Psoas muscle (tissue), 8 donors: ENCODE measurements at regions of chr17 and their contacts with region 1.

Region 1: DNA sequence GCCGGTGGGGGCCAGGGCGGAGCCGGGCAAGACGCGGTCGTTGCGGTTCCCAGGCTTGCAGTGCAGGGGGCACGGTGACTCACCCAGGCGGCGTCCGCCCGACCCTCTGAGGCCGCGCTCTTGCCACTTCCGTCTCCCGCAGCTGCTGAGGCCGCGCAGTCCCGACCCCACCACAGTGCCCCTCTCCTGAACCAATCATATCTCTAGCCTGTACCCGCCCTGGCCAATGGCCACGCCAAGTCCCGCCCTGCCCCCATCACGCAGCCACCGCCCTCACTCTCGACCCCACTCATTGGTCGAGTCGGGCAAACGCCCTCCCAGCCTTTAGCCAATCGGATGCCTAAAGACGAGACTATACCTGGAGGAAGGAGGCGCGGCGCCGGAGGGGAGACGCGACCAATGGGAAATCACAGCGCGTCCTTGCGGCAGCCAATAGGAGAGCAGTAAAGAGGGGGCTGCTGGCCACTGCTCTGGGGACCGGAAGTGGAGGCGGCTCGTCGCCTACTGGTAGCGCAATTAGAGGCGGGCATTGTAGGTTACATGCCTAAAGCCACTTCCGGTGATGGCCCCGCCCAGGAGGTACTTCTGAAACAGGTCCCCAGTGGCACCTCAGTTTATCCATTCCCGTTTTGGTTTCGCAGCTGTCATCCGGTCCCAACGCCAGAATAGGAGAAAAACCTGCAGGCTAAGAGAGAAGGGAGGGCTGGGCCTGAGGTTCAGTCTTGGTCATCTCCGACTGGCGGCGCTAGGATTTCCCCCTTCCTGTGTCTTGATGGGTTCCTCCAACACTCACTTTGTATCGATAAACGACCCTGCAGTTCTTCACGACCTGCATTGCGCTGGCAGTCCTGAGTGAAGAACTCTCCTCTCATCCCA is 3.5 kb upstream of the MTMR4 start:
- DNase-seq: peak; percentile 100
- ATAC-seq: peak; percentile 91 to 93 (median 92)
- H3K4me3 ChIP-seq: peak overlapping the region; percentile 87
- H3K27ac ChIP-seq: peak overlapping the region; percentile 97
- H3K4me1 ChIP-seq: peaks cover 26% of the 10 kb centered on the region
- H3K27me3 ChIP-seq: no peaks in the 10 kb centered on the region
- CTCF ChIP-seq: no peak

Region 2: DNA sequence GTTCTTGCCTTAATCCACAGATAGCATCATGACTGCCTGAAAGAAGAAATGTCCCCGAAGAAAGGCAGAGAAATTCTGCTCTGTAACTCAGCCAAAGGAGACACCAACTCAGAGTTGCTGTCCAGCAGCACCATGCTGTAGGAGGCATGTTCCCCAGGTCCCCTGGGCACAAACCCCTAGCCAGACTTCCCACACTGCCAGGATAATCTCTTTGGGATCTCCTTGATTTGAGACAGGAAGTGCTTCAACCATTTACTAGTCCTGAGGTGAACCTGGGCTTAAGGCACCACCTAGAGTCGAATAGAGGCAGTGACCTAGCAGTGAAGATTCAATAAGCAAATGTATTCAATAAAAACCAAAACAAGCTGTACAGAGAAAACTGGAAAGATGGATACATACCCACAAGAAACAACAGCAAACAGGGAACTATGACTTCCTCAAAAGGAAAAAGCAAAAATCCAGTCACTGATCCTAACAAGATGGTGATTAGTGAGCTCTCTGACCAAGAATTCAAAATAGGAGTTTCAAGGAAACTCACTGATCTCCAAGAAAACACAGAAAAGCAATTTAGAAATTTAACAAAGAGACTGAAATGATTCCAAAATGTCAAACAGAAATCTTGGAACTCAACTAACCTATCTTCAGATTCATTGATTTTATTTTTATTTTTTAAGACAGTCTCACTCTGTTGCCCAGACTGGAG is 345.5 kb before region 1 on chr17:
- intact Hi-C with region 1: no loop called
- DNase-seq: no peak
- ATAC-seq: no peak
- H3K4me3 ChIP-seq: no peak overlapping the region
- H3K27ac ChIP-seq: no peak overlapping the region
- H3K4me1 ChIP-seq: no peaks in the 10 kb centered on the region
- H3K27me3 ChIP-seq: peaks cover 0 to 15% (median 5%) of the 10 kb centered on the region in 3 donors
- CTCF ChIP-seq: peak; percentile 30

Region 3: DNA sequence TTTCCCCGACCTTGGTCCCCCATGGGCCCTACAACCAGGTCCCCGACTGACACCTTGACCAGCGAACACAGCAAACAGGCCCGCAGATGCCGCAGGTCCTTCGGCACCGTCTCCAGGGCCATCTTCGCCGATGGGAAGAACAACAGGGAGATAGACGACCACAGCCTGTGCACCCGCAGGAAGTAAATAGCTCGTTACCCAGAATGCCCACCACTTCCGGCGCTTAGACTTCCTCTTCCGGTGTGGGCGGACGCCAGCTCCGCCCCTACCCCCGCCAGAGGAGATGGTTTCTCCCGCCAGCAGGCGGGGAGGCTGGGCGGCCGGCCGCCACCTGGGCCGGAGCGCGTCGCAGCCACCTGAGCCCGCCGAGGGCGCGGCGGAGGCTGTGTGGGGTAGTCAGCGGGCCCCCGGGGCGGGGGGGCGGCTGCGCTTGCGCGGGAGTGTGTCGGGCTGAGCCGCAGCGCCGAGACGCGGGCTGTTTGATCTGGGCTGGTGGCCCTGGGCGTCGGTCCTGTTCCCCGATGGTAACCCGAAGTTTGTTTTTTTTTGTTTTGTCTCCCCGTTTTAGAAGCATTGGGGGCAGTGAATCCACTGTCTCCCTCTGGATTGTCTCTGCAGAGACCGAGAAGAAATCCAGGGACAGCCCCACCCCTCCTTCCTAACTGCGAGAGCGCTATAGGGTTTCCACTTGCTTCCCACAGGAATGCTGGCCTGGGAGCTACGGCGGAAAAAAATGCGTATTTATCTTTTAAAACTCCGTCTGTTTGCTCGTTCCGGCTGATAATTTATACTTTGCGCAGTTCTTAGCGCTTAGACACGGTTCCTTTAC is 165.7 kb before region 1 on chr17 and contains the start of gene SUPT4H1:
- intact Hi-C with region 1: loop called (anchors 10 kb)
- DNase-seq: peak; percentile 85 to 94
- ATAC-seq: peak; percentile 98 to 99 (median 98)
- H3K4me3 ChIP-seq: peak within 1 kb of the TSS; percentile 85
- H3K27ac ChIP-seq: peak within 1 kb of the TSS; percentile 94
- H3K4me1 ChIP-seq: peaks cover 15% of the 10 kb centered on the region
- H3K27me3 ChIP-seq: no peaks in the 10 kb centered on the region
- CTCF ChIP-seq: no peak
- total RNA-seq, gene SUPT4H1: 52.1 to 58.9 (median 56.2) TPM

Region 4: DNA sequence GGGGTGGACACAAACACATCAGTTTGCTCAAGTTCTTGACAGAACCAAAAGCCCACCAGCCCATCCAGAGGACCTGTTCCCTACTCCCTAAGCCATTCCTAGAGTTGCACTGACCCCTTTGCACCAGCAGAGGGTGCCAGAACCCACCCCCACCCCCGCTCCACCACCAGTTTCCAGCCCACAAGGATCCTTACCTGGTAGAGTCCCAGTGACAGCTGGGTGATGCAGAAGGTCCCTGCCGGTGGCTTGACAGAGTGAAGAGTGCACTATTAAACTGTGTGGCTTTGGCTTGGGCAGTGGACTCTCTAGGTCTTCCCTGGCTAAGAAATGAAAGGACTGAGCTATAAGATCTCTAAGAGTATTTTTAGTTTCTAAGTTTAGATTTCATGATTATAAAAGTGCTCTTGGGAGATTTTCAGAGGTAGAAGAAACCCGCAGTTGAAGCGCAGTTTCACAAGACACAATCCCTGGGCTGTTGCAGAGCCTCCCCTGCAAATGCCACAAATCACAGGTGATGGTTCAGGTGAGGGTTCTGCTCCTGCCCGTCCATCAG is 69.8 kb after region 1 on chr17:
- intact Hi-C with region 1: loop called in 1 of 2 experiments (anchors 5 kb)
- DNase-seq: peak; percentile 20 to 52
- ATAC-seq: peak; percentile 37 to 77 (median 50)
- H3K4me3 ChIP-seq: no peak overlapping the region
- H3K27ac ChIP-seq: no peak overlapping the region
- H3K4me1 ChIP-seq: no peaks in the 10 kb centered on the region
- H3K27me3 ChIP-seq: no peaks in the 10 kb centered on the region
- CTCF ChIP-seq: peak; percentile 77

Region 5: DNA sequence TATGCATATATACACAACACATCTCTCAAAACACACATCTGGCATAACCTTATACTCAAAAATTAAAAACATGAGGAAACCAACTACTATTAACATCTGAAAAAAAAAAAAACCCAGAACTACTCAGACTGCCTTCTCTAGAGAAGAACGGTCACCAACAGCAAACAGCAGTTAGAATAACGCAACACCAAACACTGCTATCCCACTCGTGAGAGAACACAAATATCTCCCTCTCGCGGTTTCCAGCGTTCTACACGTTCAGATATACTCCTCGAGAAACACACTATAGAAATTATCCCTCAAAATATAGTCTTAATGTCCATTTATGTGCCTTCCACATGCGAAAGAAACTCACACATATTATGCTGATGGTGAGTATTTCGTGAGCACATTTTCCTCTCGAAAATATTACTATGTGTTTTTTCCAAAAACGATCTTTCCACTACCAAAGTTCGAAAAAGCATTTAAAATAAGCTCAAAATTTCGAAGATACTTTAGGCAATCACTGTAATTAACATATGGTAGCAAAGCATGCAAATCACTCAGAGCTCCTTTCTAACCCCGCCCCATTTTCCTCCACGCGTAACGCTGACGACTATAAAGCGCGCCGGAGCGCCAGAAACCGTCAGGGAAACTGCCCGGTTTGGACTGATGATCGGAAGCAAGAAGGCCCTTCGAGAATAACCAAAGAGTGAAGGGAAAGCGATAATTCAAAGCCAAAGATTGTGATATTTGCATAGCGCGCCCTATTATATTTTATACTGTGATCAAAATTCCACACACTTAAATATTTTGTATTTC is 113.8 kb after region 1 on chr17:
- intact Hi-C with region 1: loop called in 1 of 2 experiments (anchors 10 kb)
- DNase-seq: peak; percentile 91 to 96
- ATAC-seq: peak; percentile 97 to 98 (median 98)
- H3K4me3 ChIP-seq: peak overlapping the region; percentile 61
- H3K27ac ChIP-seq: peak overlapping the region; percentile 77
- H3K4me1 ChIP-seq: no peaks in the 10 kb centered on the region
- H3K27me3 ChIP-seq: no peaks in the 10 kb centered on the region
- CTCF ChIP-seq: peak; percentile 22

Region 6: DNA sequence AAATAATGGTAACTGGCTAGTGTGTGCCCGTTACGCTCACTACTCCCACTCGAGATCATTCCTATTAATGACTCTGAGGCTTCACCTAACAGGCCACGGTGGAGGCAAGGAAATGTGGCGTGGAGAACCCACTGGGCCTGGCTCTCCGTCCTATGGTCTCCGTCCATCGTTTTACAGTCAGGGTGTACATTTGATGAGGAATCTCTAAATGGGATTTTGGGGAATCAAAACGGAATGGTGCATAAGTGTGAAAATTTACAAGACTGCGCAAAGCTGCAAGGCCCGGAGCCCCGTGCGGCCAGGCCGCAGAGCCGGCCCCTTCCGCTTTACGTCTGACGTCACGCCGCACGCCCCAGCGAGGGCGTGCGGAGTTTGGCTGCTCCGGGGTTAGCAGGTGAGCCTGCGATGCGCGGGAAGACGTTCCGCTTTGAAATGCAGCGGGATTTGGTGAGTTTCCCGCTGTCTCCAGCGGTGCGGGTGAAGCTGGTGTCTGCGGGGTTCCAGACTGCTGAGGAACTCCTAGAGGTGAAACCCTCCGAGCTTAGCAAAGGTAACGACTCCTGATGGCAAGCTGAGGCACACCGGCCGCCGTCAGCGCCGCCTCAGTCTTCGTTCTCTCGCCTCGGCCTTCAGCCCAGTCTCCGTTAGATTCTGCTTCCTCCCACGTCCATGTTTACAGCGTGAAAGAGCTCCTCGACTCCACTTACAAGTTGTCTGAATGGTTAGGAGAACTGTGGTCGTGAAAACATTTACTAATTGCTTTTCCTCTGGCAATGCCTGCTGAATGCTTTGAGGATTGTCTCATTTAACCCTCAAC is 174.5 kb after region 1 on chr17 and contains the start of gene RAD51C:
- intact Hi-C with region 1: loop called (anchors 5 to 10 kb)
- DNase-seq: peak; percentile 86 to 92
- ATAC-seq: peak; percentile 98 to 100 (median 100)
- H3K4me3 ChIP-seq: peak within 1 kb of the TSS; percentile 78
- H3K27ac ChIP-seq: peak within 1 kb of the TSS; percentile 81
- H3K4me1 ChIP-seq: peaks cover 12% of the 10 kb centered on the region
- H3K27me3 ChIP-seq: no peaks in the 10 kb centered on the region
- CTCF ChIP-seq: no peak
- total RNA-seq, gene RAD51C: 11.0 to 23.2 (median 16.6) TPM

Region 7: DNA sequence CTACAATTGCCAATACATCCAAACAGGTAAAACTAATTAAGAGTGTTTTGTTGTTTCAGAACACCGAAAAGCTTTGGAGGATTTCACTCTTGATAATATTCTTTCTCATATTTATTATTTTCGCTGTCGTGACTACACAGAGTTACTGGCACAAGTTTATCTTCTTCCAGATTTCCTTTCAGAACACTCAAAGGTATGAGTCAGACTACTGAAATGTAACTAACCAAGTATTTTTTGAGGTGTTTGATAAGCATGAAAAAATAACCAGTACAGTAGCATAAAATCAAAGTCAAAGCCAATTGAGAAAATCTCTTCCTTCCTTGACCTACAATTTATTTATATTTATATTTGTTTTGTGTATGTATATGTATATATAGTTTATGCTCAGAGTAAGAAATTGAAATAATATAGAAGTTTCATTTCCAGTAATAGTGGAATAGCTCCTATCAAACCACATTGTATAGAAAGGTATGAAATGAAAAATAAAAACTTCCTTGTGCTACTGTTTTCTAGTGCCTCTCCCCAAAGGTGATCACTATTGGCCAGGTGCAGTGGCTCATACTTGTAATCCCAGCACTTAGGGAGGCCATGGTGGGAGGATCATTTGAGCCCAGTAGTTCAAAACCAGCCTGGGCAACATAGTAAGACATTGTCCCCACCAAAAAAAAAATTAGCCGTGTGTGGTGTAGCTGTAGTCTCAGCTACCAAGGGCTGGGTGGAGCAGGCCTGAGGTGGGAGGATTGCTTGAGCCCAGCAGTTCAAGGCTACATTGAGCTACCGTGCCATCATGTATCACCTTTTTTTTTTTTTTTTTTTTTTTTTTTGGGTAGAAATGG is 185.4 kb after region 1 on chr17:
- intact Hi-C with region 1: loop called (anchors 5 to 10 kb)
- DNase-seq: no peak
- ATAC-seq: no peak
- H3K4me3 ChIP-seq: no peak overlapping the region
- H3K27ac ChIP-seq: no peak overlapping the region
- H3K4me1 ChIP-seq: no peaks in the 10 kb centered on the region
- H3K27me3 ChIP-seq: no peaks in the 10 kb centered on the region
- CTCF ChIP-seq: no peak

Region 8: GRCh38 chr17:59004338-59005111 is 486.6 kb after region 1 on chr17:
- intact Hi-C with region 1: loop called (anchors 2 kb)
- DNase-seq: peak in 1 of 2 donors; percentile 24
- ATAC-seq: peak; percentile 70 to 92 (median 75)
- H3K4me3 ChIP-seq: no peak overlapping the region
- H3K27ac ChIP-seq: no peak overlapping the region
- H3K4me1 ChIP-seq: no peaks in the 10 kb centered on the region
- H3K27me3 ChIP-seq: no peaks in the 10 kb centered on the region
- CTCF ChIP-seq: peak; percentile 95